Activated B cell treated with CpG ODN at 0.5 μM for 24 hours (primary cell): ENCODE measurements at regions of chr5 and their contacts with region 1.

Region 1: DNA sequence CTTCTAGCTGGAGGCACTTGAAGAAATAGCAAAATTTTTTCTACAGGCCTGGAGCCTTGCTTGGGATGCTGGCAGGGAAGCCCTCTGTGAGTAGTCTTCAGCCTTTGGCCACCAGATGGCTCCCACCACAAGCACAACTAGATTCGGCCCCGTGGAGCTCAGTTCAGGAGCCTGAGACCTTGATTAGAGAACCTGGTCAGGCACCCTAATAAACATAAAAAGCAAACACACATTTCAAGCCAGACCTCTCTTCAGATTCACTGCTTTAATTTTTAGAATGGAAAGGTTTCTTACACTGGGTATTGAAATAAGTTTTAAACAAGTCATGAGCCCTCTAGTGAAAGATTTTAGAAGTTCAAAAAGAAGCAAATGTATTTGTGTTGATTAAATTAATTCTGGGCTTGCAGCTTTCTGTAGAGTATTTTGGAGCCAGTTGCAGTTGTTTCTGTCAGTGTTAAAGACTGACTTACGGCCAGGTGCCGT is 41.4 kb downstream of the GLRX start:
- DNase-seq: peak; percentile 46
- ATAC-seq: peak; percentile 99
- H3K4me3 Mint-ChIP-seq: peak overlapping the region; percentile 21
- H3K27ac Mint-ChIP-seq: peak overlapping the region; percentile 43
- H3K4me1 Mint-ChIP-seq: peaks cover 7% of the 10 kb centered on the region
- H3K27me3 Mint-ChIP-seq: no peaks in the 10 kb centered on the region
- CTCF ChIP-seq: no peak

Region 2: GRCh38 chr5:95664204-95664786 is 116.8 kb before region 1 on chr5:
- CTCF ChIA-PET with region 1: interaction called, 47 read pairs
- POLR2A ChIA-PET with region 1: interaction called, 5 read pairs
- intact Hi-C with region 1: loop called (anchors 1 kb)
- DNase-seq: no peak
- ATAC-seq: no peak
- H3K4me3 Mint-ChIP-seq: no peak overlapping the region
- H3K27ac Mint-ChIP-seq: no peak overlapping the region
- H3K4me1 Mint-ChIP-seq: no peaks in the 10 kb centered on the region
- H3K27me3 Mint-ChIP-seq: peaks cover 1% of the 10 kb centered on the region
- CTCF ChIP-seq: peak; percentile 81

Region 3: DNA sequence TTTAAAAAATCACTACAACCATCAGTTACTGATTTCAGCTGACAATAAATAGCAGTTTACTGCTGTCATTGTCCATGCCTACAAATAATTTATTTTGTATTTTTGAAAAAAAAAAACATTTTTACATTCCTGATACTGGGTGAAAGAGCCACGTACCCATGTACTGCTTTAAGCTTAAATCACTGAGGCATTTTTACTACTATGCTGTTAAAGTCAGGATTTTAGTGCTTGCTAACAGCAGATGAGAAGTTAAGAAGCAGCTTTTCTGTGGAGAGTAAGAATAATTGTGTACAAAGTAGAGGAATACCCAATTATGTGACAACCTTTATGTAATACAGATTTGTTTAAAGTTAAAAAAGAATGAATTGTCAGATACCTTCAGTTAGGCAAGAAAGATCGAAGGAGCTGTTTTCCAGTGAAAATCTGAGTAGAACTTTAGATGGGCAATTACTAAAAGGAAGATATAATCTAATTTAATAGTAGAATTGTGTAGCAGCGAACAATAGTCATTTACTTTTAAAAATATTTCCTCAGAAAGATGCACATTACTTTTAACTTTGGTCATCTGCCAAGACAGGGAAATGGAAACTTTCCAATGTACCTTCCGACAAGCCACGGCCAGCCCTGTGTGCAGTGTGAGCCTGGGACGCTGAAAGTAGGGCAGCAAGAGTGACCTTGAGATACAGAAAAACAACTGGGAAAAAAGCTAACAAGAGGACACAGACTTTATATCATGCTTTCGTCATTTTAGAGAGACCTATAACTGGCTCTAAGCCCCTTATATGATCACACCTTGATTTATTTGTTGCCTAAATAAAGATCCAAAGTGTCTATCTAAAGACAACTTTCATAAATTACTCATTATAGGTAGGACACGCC is 10.1 kb before region 1 on chr5:
- CTCF ChIA-PET with region 1: interaction called, 24 read pairs
- POLR2A ChIA-PET with region 1: no interaction called
- intact Hi-C with region 1: no loop called
- DNase-seq: no peak
- ATAC-seq: no peak
- H3K4me3 Mint-ChIP-seq: no peak overlapping the region
- H3K27ac Mint-ChIP-seq: no peak overlapping the region
- H3K4me1 Mint-ChIP-seq: no peaks in the 10 kb centered on the region
- H3K27me3 Mint-ChIP-seq: no peaks in the 10 kb centered on the region
- CTCF ChIP-seq: no peak

Region 4: DNA sequence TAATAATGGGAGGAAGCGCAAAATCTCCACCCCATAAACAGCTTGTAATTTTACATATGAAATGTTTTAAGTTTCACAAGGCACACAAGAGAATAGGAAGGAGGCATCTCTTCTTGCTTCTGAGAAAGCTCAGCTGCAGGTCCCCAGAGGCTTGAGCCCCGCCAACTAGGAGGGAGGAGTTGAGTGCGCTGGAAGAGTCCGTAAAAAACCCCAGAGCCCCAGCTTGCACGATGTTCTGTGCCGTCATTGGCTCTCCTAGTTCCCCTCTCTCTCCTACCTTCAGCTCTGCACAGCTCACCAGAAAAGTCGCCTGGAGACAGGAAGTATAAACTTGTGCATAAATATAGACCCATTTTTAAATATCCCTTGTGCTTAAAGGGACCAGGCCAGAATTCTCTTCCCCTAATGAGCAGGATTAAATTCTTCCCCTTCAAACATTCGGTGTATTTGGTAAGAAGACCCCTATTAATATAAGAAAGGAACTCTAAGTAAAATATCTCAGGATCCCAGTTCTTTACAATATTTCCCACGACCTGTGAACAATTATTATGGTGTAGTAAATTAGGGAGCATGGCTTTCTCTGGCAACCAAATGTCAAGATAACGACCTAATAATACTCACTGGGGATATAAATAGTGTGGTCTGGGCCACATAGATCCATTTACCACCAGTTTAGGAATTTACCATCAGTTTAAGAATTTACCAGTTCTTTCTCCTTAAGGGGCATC is 27.7 kb after region 1 on chr5:
- CTCF ChIA-PET with region 1: interaction called, 63 read pairs
- POLR2A ChIA-PET with region 1: interaction called, 12 read pairs
- intact Hi-C with region 1: loop called (anchors 1 kb)
- DNase-seq: peak; percentile 72
- ATAC-seq: peak; percentile 99
- H3K4me3 Mint-ChIP-seq: peak overlapping the region; percentile 77
- H3K27ac Mint-ChIP-seq: peak overlapping the region; percentile 95
- H3K4me1 Mint-ChIP-seq: peaks cover 56% of the 10 kb centered on the region
- H3K27me3 Mint-ChIP-seq: no peaks in the 10 kb centered on the region
- CTCF ChIP-seq: no peak

Region 5: GRCh38 chr5:95835682-95836385 is 54.7 kb after region 1 on chr5:
- CTCF ChIA-PET with region 1: interaction called, 389 read pairs
- POLR2A ChIA-PET with region 1: interaction called, 11 read pairs
- intact Hi-C with region 1: no loop called
- DNase-seq: no peak
- ATAC-seq: no peak
- H3K4me3 Mint-ChIP-seq: peak overlapping the region; percentile 92
- H3K27ac Mint-ChIP-seq: peak overlapping the region; percentile 84
- H3K4me1 Mint-ChIP-seq: peaks cover 55% of the 10 kb centered on the region
- H3K27me3 Mint-ChIP-seq: no peaks in the 10 kb centered on the region
- CTCF ChIP-seq: no peak

Region 6: GRCh38 chr5:95961617-95962474 is 180.7 kb after region 1 on chr5 and contains the start of gene ELL2:
- CTCF ChIA-PET with region 1: no interaction called
- POLR2A ChIA-PET with region 1: no interaction called
- intact Hi-C with region 1: loop called (anchors 5 kb)
- DNase-seq: peak; percentile 92
- ATAC-seq: peak; percentile 84
- H3K4me3 Mint-ChIP-seq: peak within 1 kb of the TSS; percentile 99
- H3K27ac Mint-ChIP-seq: peak within 1 kb of the TSS; percentile 97
- H3K4me1 Mint-ChIP-seq: peaks cover 48% of the 10 kb centered on the region
- H3K27me3 Mint-ChIP-seq: no peaks in the 10 kb centered on the region
- CTCF ChIP-seq: no peak
- total RNA-seq, gene ELL2: 52.9 and 56.0 TPM in 2 replicates